Panc1 (cell line): ENCODE measurements at regions of chr12 and their contacts with region 1.

Region 1: DNA sequence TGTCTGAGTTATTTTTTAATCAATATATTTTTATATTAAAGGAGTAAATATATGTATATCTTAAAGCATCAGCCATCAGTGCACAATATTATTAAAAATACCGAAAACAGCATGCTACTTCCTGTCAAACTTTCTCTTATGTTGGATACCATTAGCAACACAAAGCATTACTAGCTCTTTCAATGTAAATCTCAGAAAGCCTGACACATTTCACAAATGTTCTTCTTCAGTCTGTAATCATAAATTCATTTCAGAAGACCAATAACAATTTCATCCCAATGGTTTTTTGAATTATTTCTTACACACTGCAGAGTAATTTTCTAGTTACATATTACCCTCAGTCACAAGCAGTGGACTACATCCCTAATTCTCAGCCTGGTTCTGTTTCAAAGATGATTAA is 226.9 kb downstream of the LRRK2 start:
- DNase-seq: no peak
- ATAC-seq: no peak
- H3K4me3 ChIP-seq: no peak overlapping the region
- H3K27ac ChIP-seq: no peak overlapping the region
- H3K4me1 ChIP-seq: no peaks in the 10 kb centered on the region
- H3K27me3 ChIP-seq: no peaks in the 10 kb centered on the region
- CTCF ChIP-seq: no peak

Region 2: GRCh38 chr12:40300490-40300889 is 151.2 kb before region 1 on chr12:
- CTCF ChIA-PET with region 1: no interaction called
- POLR2A ChIA-PET with region 1: no interaction called
- in situ Hi-C with region 1: no loop called
- intact Hi-C with region 1: no loop called
- DNase-seq: no peak
- ATAC-seq: no peak
- H3K4me3 ChIP-seq: no peak overlapping the region
- H3K27ac ChIP-seq: no peak overlapping the region
- H3K4me1 ChIP-seq: no peaks in the 10 kb centered on the region
- H3K27me3 ChIP-seq: no peaks in the 10 kb centered on the region
- CTCF ChIP-seq: no peak

Region 3: DNA sequence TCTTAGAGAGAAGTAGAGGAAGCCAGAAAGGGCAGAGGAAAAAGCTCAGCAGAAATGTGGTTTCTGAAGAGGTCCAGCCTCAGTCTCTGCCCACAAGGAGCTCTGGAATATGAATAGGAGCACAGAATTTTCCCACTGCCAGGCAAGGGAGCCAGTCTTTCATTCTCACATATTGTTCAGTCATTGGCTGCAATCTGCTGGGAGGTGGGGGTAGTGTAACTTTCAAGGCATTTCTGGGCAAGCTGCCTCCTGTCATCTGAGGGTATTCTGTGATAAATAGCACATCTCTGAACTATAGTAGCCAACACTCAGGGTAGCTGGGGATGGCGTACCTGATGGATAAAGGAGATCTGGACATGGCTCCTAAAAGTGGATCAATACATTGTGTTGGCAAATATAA is 99.7 kb before region 1 on chr12:
- CTCF ChIA-PET with region 1: no interaction called
- POLR2A ChIA-PET with region 1: no interaction called
- in situ Hi-C with region 1: no loop called
- intact Hi-C with region 1: no loop called
- DNase-seq: no peak
- ATAC-seq: no peak
- H3K4me3 ChIP-seq: no peak overlapping the region
- H3K27ac ChIP-seq: no peak overlapping the region
- H3K4me1 ChIP-seq: no peaks in the 10 kb centered on the region
- H3K27me3 ChIP-seq: no peaks in the 10 kb centered on the region
- CTCF ChIP-seq: no peak

Region 4: DNA sequence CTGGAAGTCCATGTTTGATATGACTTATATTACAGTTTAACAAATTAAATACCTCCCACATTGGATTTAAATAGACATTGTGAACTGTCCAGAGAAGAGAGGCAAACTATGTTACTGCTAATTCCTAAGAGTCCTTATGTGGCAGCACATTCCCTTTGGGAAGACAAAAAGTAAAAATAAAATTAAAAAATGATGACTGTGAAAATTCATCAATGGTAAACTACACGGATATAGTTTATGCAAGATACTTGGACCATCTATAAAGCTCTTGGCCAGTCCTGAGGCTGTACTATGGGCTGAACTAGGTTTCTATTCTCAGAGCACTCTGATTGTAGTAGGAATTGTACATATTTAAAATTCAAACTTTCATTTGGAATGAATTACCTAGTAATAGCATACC is 20.5 kb before region 1 on chr12:
- CTCF ChIA-PET with region 1: interaction called, 13 read pairs
- POLR2A ChIA-PET with region 1: no interaction called
- in situ Hi-C with region 1: no loop called
- intact Hi-C with region 1: no loop called
- DNase-seq: no peak
- ATAC-seq: no peak
- H3K4me3 ChIP-seq: no peak overlapping the region
- H3K27ac ChIP-seq: no peak overlapping the region
- H3K4me1 ChIP-seq: no peaks in the 10 kb centered on the region
- H3K27me3 ChIP-seq: no peaks in the 10 kb centered on the region
- CTCF ChIP-seq: no peak